Posterior vena cava (tissue), 2 donors: ENCODE measurements at regions of chr12 and their contacts with region 1.

Region 1: GRCh38 chr12:3998968-3999826 is 126.0 kb upstream of the PARP11 start:
- DNase-seq: no peak

Region 2: GRCh38 chr12:4037747-4038312 is 38.6 kb after region 1 on chr12:
- intact Hi-C with region 1: loop called in 1 of 2 experiments (anchors 1 kb)
- DNase-seq: no peak

Region 3: DNA sequence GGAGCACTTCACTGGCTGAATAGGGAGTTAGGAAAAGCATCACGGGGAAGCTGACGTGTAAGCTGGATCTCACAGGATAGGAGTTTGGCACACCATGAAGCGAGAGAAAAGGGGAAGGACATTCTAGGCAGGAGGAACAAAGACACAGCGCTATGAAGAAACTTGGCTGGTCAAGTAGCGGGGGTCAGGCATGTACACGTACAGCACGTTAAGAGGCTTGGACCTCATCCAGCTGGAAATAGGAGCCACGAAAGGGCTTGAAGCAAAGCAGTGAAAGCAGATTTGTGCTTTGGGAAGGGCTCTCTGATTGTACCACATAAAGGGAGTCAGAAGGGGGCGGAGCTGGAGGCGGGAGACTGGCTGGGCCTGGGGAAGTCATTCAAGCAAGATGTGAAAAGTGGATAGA is 701.4 kb after region 1 on chr12:
- intact Hi-C with region 1: no loop called
- DNase-seq: peak; percentile 85